Ovary (tissue), 10 donors: ENCODE measurements at regions of chr2 and their contacts with region 1.

Region 1: DNA sequence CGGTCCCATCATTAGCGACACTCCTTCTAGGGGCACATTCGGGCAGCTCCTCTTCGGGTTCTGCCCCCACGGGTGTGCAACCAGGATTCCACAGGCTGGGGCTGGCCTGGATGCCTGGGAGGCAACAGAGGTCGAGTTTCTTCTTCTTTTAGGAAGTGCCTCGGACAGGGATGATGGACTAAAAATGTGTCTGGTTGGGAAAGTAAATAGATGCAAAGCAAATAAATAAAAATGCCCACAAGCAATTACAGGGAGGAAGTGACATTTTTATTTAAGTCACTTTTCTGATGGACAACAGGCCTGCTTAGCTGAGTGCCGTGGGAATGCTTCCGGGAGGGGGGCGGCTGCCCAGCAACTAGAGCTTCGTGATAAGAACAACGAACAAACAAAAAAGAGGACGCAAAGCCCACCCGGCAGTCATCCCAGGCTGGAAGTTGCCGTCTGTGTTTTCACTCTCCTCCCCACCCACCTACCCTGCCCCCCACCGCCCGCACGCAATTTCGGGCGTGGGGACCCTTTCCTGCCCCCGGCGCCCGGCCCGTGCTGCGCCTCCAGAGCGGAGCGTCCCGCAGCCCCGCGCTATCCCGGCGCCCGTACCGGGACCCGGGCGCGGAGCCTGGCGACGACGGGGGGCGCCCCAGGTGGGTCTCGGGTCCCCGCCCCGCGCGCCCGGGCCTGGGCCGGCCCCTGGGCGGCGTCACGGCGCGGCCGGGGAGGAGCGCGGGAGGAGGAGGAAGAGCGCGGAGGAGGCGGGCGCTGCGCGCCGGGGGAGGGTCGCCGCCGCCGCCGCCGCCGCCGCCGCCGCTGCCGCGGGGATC is 412 bp upstream of the NCK2 start:
- DNase-seq: peak; percentile 52 to 77 (median 66)
- H3K4me3 ChIP-seq: peak overlapping the region; percentile 80
- H3K27ac ChIP-seq: peak overlapping the region in 1 of 2 donors; percentile 88
- H3K4me1 ChIP-seq: peaks cover 18% of the 10 kb centered on the region
- H3K27me3 ChIP-seq: no peaks in the 10 kb centered on the region
- CTCF ChIP-seq: no peak
- EP300 ChIP-seq: no peak
- POLR2A ChIP-seq: no peak

Region 2: GRCh38 chr2:105888625-105889400 is 144.5 kb after region 1 on chr2:
- intact Hi-C with region 1: loop called in 1 of 4 experiments (anchors 10 kb)
- DNase-seq: no peak
- H3K4me3 ChIP-seq: no peak overlapping the region
- H3K27ac ChIP-seq: no peak overlapping the region
- H3K4me1 ChIP-seq: peaks cover 6% of the 10 kb centered on the region
- H3K27me3 ChIP-seq: no peaks in the 10 kb centered on the region
- CTCF ChIP-seq: no peak
- EP300 ChIP-seq: no peak
- POLR2A ChIP-seq: no peak

Region 3: DNA sequence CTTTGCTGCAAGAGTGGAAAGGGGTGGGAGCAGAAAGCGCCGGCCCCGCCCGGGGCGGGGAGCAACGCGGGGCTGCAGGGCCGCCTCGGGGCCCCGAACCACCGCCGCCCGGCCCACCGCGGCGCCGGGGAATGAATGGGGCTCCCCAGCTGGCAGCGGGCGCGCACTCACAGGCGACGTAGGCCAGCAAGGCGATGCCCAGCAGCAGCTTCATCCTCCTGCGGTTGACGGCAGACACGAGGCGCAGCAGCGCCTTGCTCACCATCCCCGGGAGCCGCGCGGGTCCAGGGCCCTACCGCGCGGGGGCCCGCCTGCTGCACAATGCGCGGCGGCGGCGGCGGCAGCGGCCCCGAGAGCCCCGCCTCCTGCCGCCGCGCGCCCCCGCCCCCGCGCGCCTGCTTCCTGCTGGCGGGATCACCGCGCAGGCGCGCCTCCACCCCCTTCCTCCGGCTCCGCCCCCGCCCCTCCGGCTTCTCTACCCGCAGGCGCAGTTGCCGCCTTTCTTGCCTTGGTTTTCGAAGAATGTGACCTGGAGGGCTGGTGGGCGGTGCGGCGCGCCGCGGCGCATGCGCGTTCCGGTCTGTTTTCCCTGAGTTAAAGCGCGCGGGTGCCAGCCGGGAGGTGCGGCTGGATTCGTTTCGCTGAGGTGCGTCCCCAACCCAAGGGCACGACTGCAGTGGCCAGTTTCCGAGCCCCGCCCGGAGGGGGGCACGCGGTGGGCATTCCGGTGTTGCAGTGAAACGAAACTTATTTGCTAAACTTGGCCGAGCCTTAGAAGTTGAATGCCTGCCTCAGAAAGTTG is 449.9 kb after region 1 on chr2 and contains the start of gene UXS1:
- intact Hi-C with region 1: loop called in 1 of 4 experiments (anchors 10 kb)
- DNase-seq: peak; percentile 97 to 99 (median 98)
- H3K4me3 ChIP-seq: peak within 1 kb of the TSS; percentile 94
- H3K27ac ChIP-seq: peak within 1 kb of the TSS; percentile 16 to 68
- H3K4me1 ChIP-seq: peaks cover 5% of the 10 kb centered on the region
- H3K27me3 ChIP-seq: no peaks in the 10 kb centered on the region
- CTCF ChIP-seq: no peak
- EP300 ChIP-seq: no peak
- POLR2A ChIP-seq: peak; percentile 9
- total RNA-seq, gene UXS1: 23.9 to 70.8 (median 27.7) TPM